ENCODE measurements at regions of chr13 and their contacts with region 1.

Region 1: GRCh38 chr13:80901111-80901510 is 560.2 kb upstream of the SPRY2 start:
- DNase-seq: no peak
- ATAC-seq: peak; percentile 81

Region 2: DNA sequence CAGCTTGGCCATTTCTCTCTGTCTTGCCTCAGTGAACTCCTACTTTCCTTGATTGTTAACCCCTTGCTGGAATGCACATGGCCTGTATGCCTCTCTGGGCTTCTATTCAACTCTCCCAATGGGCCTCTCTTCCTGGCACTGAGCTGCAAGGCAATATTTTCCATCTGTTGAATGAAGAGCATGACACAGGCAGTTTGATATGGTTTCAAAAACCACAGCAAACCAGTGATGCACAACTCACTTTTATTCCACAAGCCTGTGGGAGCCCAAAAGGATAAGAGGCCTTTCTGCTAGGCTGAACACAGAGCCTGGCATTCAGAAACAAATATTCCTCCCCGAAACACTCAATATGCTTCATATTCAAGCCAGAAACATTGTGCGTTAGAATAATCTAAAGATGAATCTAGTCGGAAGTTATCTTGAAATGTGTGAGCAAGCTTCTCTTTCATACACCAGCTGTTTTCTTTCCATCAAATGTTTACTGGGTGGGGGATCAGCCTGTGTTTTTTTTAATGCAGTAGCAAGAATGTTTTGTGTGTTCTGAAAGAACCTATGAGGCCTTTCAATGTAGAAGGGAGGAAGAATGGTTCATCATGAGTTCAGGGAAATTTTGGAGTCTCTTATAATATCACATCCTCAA is 117.1 kb before region 1 on chr13:
- intact Hi-C with region 1: no loop called
- DNase-seq: no peak
- ATAC-seq: peak; percentile 84

Region 3: DNA sequence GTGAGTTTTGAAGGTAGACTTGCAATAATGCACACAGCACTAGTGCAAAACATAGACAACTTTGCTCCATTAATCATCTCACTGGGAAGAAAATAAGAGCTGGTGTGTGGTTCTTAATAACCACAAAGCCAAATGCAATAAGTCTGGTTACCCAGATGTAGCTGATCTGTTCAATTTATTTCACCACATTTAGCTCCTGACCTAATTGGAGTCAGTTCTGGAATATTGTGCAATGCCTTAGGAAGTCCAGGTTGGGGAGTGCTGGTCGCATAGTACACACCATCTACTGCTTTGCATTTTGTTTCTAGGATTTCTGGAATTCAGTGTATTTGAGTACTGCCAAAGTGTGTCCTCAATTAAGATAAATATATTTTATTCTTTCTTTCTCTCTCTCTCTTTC is 76.9 kb before region 1 on chr13:
- intact Hi-C with region 1: loop called (anchors 10 kb)
- DNase-seq: no peak
- ATAC-seq: peak; percentile 98

Region 4: GRCh38 chr13:81770868-81771505 is 869.9 kb after region 1 on chr13:
- intact Hi-C with region 1: no loop called
- DNase-seq: no peak
- ATAC-seq: no peak